ENCODE measurements at regions of chr1 and their contacts with region 1.

Region 1: GRCh38 chr1:182397771-182398393 is 2.6 kb downstream of the TEDDM1 start:
- DNase-seq: peak; percentile 81
- H3K4me3 Mint-ChIP-seq: peak overlapping the region; percentile 0
- H3K27ac Mint-ChIP-seq: peak overlapping the region; percentile 76
- H3K4me1 Mint-ChIP-seq: peaks cover 22% of the 10 kb centered on the region
- H3K27me3 Mint-ChIP-seq: no peaks in the 10 kb centered on the region
- CTCF ChIP-seq: no peak

Region 2: GRCh38 chr1:182069028-182069466 is 328.8 kb before region 1 on chr1:
- CTCF ChIA-PET with region 1: interaction called, 10 read pairs
- POLR2A ChIA-PET with region 1: no interaction called
- intact Hi-C with region 1: no loop called
- DNase-seq: peak; percentile 81
- H3K4me3 Mint-ChIP-seq: no peak overlapping the region
- H3K27ac Mint-ChIP-seq: no peak overlapping the region
- H3K4me1 Mint-ChIP-seq: no peaks in the 10 kb centered on the region
- H3K27me3 Mint-ChIP-seq: no peaks in the 10 kb centered on the region
- CTCF ChIP-seq: peak; percentile 94

Region 3: DNA sequence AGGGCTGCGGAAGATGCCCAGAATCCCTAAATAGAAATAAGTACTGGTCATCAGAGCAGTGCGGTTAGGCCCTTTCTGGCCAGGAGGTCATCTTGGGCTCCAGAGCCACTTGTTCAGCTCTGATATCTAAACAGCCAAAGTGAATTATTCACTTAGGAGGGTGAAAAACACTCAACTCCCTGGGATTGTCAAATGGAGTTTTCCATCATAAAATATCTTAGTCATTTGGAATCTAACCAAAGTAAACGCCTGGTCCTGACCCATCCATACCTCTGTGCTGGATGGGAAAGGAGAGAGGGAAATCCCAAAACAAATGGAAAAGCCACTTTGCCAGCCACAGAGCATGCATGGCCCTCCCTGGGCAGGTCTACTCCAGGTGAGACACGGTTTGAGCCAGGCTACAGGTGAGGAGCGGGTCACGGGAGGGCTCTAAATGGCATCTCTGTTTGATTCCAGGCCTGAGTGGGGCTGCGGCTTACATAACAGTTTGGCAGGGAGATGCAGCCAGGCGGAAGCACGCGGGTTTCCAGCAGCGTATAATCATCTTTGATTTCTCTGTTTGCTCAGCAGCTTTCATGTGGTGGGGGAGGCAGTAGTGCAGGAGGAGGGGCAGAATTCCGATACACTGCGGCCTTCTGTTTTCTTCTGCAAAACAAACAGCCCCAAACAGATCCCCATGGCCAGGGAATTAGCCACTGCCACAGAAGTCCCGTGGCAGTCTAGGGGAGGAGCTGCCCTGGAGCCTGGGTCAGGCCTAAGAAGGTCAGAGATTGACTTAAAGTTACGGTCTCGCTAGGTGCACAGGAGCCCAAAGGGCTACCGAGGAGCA is 277.3 kb before region 1 on chr1:
- CTCF ChIA-PET with region 1: interaction called, 10 read pairs
- POLR2A ChIA-PET with region 1: interaction called, 3 read pairs
- intact Hi-C with region 1: no loop called
- DNase-seq: peak; percentile 75
- H3K4me3 Mint-ChIP-seq: no peak overlapping the region
- H3K27ac Mint-ChIP-seq: no peak overlapping the region
- H3K4me1 Mint-ChIP-seq: peaks cover 13% of the 10 kb centered on the region
- H3K27me3 Mint-ChIP-seq: no peaks in the 10 kb centered on the region
- CTCF ChIP-seq: no peak

Region 4: DNA sequence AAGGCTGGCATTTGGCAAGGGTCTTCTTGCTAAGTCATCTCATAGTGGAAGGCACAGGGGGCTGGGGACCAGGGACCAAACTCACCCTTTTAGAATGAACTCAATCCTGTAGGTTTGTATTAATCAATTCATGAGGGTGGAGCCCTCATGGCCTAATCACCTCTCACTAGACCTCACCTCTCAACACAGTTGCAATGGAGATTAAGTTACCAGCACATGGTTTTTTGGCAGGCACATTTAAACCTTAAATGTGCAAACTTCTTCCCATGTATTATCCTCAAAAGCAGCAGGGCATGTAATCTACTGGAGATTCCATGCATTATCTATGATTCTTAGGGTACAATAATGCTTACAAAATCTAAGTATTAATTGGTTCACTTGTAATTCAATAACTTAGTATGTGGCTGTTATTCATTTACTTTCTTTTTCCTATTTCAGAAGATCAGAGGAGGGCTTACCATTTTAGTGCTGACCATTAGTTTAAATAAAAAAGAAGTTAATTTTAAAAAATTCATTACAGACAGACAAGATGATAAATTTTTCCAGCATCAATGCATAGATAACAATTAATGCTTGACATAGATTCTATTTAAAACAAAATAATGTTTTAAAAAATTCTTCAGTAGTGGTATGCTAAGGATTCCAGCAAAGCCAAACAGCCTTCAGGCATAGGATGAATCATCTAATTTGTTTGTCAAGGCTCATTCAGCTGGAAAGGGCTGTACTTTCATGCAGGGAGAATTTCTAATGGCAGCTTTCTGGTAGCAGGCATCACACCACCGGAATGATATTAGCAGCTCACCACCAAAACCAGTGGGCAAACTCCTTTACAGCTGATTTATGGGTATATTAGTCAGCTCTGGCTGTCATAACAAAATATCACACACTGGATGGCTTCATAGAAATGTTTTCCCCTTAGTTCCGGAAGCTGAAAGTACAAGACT is 211.8 kb before region 1 on chr1:
- CTCF ChIA-PET with region 1: interaction called, 6 read pairs
- POLR2A ChIA-PET with region 1: interaction called, 16 read pairs
- intact Hi-C with region 1: no loop called
- DNase-seq: peak; percentile 91
- H3K4me3 Mint-ChIP-seq: peak overlapping the region; percentile 10
- H3K27ac Mint-ChIP-seq: peak overlapping the region; percentile 81
- H3K4me1 Mint-ChIP-seq: peaks cover 58% of the 10 kb centered on the region
- H3K27me3 Mint-ChIP-seq: no peaks in the 10 kb centered on the region
- CTCF ChIP-seq: no peak

Region 5: GRCh38 chr1:182291584-182292192 is 106.2 kb before region 1 on chr1:
- CTCF ChIA-PET with region 1: interaction called, 26 read pairs
- POLR2A ChIA-PET with region 1: interaction called, 70 read pairs
- intact Hi-C with region 1: no loop called
- DNase-seq: no peak
- H3K4me3 Mint-ChIP-seq: no peak overlapping the region
- H3K27ac Mint-ChIP-seq: peak overlapping the region; percentile 36
- H3K4me1 Mint-ChIP-seq: peaks cover 31% of the 10 kb centered on the region
- H3K27me3 Mint-ChIP-seq: no peaks in the 10 kb centered on the region
- CTCF ChIP-seq: no peak

Region 6: DNA sequence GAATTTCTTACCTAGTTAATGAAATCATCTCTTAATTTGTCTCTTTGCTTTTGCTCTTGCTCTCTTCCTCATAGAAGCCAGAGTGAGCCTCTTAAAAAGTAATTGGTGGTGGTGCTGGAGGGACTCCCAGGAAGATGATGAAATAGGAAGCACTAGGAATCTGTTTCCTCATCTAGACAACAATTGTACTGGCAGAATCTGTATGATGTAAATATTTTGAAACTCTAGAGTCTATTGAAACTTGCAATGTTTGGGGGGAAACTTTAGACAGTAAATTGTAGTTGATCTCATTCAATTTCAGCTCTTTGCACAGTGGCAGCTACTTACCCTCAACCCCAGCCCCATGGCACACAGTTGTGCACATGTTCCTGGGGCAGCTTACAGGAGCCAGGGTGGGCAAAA is 62.7 kb after region 1 on chr1:
- CTCF ChIA-PET with region 1: no interaction called
- POLR2A ChIA-PET with region 1: no interaction called
- intact Hi-C with region 1: no loop called
- DNase-seq: peak; percentile 57
- H3K4me3 Mint-ChIP-seq: no peak overlapping the region
- H3K27ac Mint-ChIP-seq: peak overlapping the region; percentile 72
- H3K4me1 Mint-ChIP-seq: peaks cover 7% of the 10 kb centered on the region
- H3K27me3 Mint-ChIP-seq: peaks cover 7% of the 10 kb centered on the region
- CTCF ChIP-seq: no peak

Region 7: GRCh38 chr1:182588500-182589452 is 190.9 kb after region 1 on chr1 and contains the start of gene RNASEL:
- CTCF ChIA-PET with region 1: interaction called, 15 read pairs
- POLR2A ChIA-PET with region 1: interaction called, 3 read pairs
- intact Hi-C with region 1: loop called (anchors 2 kb)
- DNase-seq: peak; percentile 85
- H3K4me3 Mint-ChIP-seq: peak within 1 kb of the TSS; percentile 84
- H3K27ac Mint-ChIP-seq: peak within 1 kb of the TSS; percentile 93
- H3K4me1 Mint-ChIP-seq: peaks cover 5% of the 10 kb centered on the region
- H3K27me3 Mint-ChIP-seq: no peaks in the 10 kb centered on the region
- CTCF ChIP-seq: no peak
- total RNA-seq, gene RNASEL: 4.2 and 8.0 TPM in 2 replicates

Measured in MCF 10A (cell line).